Naive thymus-derived CD4-positive, alpha-beta T cell (primary cell): ENCODE measurements at regions of chr9 and their contacts with region 1.

Region 1: DNA sequence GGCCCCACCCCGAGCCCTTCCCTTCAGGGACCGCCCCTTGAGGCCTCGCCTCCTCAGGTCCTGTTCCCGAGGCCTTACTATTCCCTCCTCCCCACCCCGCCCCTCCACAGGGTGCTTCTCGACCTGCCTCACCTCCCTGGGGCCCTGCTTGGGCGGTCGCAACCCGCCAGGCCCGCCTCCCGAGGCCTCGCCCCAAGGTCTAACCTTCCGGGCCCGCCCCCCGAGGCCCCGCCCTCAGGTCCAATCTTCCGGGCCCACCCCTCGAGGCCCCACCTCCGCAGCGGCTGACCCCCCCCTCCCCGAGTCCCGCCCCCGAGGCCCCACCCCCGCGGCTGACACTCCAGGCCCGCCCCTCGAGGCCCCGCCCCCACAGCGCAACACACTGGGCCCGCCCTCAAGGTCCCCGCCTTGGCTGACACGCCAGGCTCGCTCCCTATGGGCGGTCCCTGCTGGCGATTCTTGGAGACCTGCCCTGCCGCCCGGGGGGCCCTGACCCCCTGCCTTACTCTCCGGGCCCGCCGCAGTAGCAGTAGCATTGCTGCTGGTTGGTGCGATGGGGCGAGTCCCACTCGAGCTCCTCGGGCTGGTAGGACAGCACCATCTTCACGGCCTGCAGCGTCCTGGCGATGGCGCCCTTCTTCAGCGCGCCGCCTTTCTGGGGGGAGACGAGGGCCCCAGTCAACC is 8.2 kb downstream of the PHF19 start:
- DNase-seq: peak; percentile 92 to 97 (median 95)
- ATAC-seq: peak; percentile 91
- H3K4me3 ChIP-seq: peak overlapping the region; percentile 78
- H3K4me3 Mint-ChIP-seq: peak overlapping the region; percentile 49 to 95 (median 91)
- H3K27ac ChIP-seq: peak overlapping the region; percentile 77
- H3K27ac Mint-ChIP-seq: peak overlapping the region; percentile 79 to 97 (median 94)
- H3K4me1 ChIP-seq: peaks cover 7 to 10% of the 10 kb centered on the region in 2 donors
- H3K4me1 Mint-ChIP-seq: peaks cover 13 to 49% (median 24%) of the 10 kb centered on the region in 7 donors
- H3K27me3 ChIP-seq: no peaks in the 10 kb centered on the region
- H3K27me3 Mint-ChIP-seq: no peaks in the 10 kb centered on the region

Region 2: GRCh38 chr9:119968836-119969707 is 899.7 kb before region 1 on chr9:
- CTCF ChIA-PET with region 1: no interaction called
- POLR2A ChIA-PET with region 1: no interaction called
- intact Hi-C with region 1: no loop called
- DNase-seq: peak in 6 of 9 donors; percentile 0 to 43 (median 2)
- ATAC-seq: peak; percentile 72
- H3K4me3 ChIP-seq: no peak overlapping the region
- H3K4me3 Mint-ChIP-seq: no peak overlapping the region
- H3K27ac ChIP-seq: no peak overlapping the region
- H3K27ac Mint-ChIP-seq: no peak overlapping the region
- H3K4me1 ChIP-seq: no peaks in the 10 kb centered on the region
- H3K4me1 Mint-ChIP-seq: peaks cover 0 to 5% (median 2%) of the 10 kb centered on the region in 7 donors
- H3K27me3 ChIP-seq: no peaks in the 10 kb centered on the region
- H3K27me3 Mint-ChIP-seq: peaks cover 1 to 28% (median 19%) of the 10 kb centered on the region in 5 donors

Region 3: GRCh38 chr9:120714088-120714845 is 154.6 kb before region 1 on chr9 and contains the start of gene MEGF9:
- CTCF ChIA-PET with region 1: no interaction called
- POLR2A ChIA-PET with region 1: no interaction called
- intact Hi-C with region 1: loop called (anchors 1 kb)
- DNase-seq: peak; percentile 90 to 97 (median 94)
- ATAC-seq: peak; percentile 98
- H3K4me3 ChIP-seq: peak within 1 kb of the TSS; percentile 85
- H3K4me3 Mint-ChIP-seq: peak within 1 kb of the TSS; percentile 82 to 98 (median 87)
- H3K27ac ChIP-seq: peak within 1 kb of the TSS; percentile 79
- H3K27ac Mint-ChIP-seq: peak within 1 kb of the TSS; percentile 31 to 98 (median 87)
- H3K4me1 ChIP-seq: peaks cover 22% of the 10 kb centered on the region in 2 donors
- H3K4me1 Mint-ChIP-seq: peaks cover 18 to 43% (median 36%) of the 10 kb centered on the region in 7 donors
- H3K27me3 ChIP-seq: no peaks in the 10 kb centered on the region
- H3K27me3 Mint-ChIP-seq: no peaks in the 10 kb centered on the region
- total RNA-seq, gene MEGF9: 9.5 to 35.4 (median 11.1) TPM

Region 4: DNA sequence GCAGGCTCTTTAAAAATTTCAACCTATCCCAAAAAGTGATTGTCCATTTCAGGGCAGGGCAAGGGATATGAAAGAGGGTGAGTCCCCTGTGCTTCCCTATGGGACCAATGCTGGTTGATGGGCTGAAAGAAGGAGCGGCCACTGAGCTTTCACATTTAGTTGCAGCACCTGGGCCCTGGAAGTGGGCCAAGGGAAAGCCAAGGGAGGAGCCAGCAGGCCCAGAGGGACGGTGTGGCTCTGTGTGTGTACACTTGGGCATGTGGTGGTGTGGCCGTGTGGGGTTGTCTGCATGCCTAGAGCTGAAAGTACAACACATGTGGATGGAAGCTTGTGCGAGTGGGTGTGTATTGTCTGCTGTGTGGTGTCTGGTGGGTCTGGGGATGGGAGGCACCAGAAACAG is 12.1 kb before region 1 on chr9:
- CTCF ChIA-PET with region 1: interaction called, 3 read pairs
- POLR2A ChIA-PET with region 1: interaction called, 10 read pairs
- intact Hi-C with region 1: no loop called
- DNase-seq: no peak
- ATAC-seq: no peak
- H3K4me3 ChIP-seq: no peak overlapping the region
- H3K4me3 Mint-ChIP-seq: no peak overlapping the region
- H3K27ac ChIP-seq: no peak overlapping the region
- H3K27ac Mint-ChIP-seq: peak overlapping the region in 2 of 9 donors; percentile 21 to 36
- H3K4me1 ChIP-seq: no peaks in the 10 kb centered on the region
- H3K4me1 Mint-ChIP-seq: peaks cover 4 to 23% (median 18%) of the 10 kb centered on the region in 7 donors
- H3K27me3 ChIP-seq: no peaks in the 10 kb centered on the region
- H3K27me3 Mint-ChIP-seq: no peaks in the 10 kb centered on the region

Region 5: GRCh38 chr9:120936011-120936763 is 67.4 kb after region 1 on chr9:
- CTCF ChIA-PET with region 1: interaction called, 49 read pairs
- POLR2A ChIA-PET with region 1: interaction called, 243 read pairs
- intact Hi-C with region 1: loop called (anchors 1 kb)
- DNase-seq: peak; percentile 71 to 89 (median 82)
- ATAC-seq: peak; percentile 85
- H3K4me3 ChIP-seq: peak overlapping the region; percentile 21
- H3K4me3 Mint-ChIP-seq: peak overlapping the region; percentile 33 to 77 (median 62)
- H3K27ac ChIP-seq: peak overlapping the region; percentile 97
- H3K27ac Mint-ChIP-seq: peak overlapping the region; percentile 88 to 100 (median 98)
- H3K4me1 ChIP-seq: peaks cover 61% of the 10 kb centered on the region in 2 donors
- H3K4me1 Mint-ChIP-seq: peaks cover 31 to 71% (median 63%) of the 10 kb centered on the region in 7 donors
- H3K27me3 ChIP-seq: no peaks in the 10 kb centered on the region
- H3K27me3 Mint-ChIP-seq: peaks cover 0 to 2% (median 0%) of the 10 kb centered on the region in 5 donors

Region 6: DNA sequence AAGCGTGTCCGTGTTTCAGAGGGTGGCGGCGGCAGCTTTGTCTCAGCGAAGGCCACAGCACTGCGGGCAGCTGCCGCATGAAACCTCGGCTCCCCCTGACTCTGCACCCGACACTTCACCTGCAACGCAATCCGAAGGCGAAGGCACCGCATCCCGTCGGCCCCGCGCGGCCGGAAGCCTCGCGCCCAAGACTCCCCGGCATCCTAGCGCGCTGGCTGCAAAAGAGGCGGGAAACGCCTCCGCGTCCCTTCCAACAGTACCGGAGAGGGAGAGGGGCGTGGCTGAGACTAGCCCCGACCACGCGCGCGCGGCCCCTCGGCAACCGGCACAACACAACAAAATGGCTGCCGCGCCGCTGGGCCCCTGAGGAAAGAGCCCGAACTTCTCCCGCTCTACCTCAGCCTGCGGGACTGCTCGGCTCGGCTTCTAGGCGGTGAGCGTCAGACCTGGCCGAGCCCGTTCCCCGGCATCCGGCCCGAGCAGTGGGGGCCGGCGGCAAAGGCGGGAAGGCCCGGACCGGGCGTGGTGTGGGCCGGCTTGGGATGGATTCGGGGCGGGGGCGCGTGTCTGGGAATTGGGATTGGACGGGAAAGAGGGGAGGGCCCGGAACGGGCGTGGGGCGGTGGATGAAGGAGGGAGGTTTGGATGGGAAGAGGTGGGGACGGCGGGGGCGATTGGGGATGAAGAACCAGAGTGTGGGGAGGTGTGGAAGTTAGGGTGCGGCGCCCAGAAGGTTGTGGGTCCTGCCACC is 206.0 kb after region 1 on chr9 and contains the start of gene CNTRL:
- CTCF ChIA-PET with region 1: interaction called, 4 read pairs
- POLR2A ChIA-PET with region 1: no interaction called
- intact Hi-C with region 1: loop called (anchors 1 to 2 kb)
- DNase-seq: peak; percentile 63 to 92 (median 81)
- ATAC-seq: peak; percentile 90
- H3K4me3 ChIP-seq: peak within 1 kb of the TSS; percentile 90
- H3K4me3 Mint-ChIP-seq: peak within 1 kb of the TSS; percentile 87 to 100 (median 99)
- H3K27ac ChIP-seq: peak within 1 kb of the TSS; percentile 92
- H3K27ac Mint-ChIP-seq: peak within 1 kb of the TSS; percentile 80 to 99 (median 93)
- H3K4me1 ChIP-seq: peaks cover 22 to 24% of the 10 kb centered on the region in 2 donors
- H3K4me1 Mint-ChIP-seq: peaks cover 27 to 65% (median 50%) of the 10 kb centered on the region in 7 donors
- H3K27me3 ChIP-seq: no peaks in the 10 kb centered on the region
- H3K27me3 Mint-ChIP-seq: no peaks in the 10 kb centered on the region
- total RNA-seq, gene CNTRL: 74.5 to 131 (median 88.6) TPM